Activated CD4-positive, alpha-beta T cell treated with anti-CD3 and anti-CD28 coated beads, Interleukin-2, amount 10 ng/mL, durations not matched to agents 24 days and 14 days (primary cell): ENCODE measurements at regions of chr1 and their contacts with region 1.

Region 1: DNA sequence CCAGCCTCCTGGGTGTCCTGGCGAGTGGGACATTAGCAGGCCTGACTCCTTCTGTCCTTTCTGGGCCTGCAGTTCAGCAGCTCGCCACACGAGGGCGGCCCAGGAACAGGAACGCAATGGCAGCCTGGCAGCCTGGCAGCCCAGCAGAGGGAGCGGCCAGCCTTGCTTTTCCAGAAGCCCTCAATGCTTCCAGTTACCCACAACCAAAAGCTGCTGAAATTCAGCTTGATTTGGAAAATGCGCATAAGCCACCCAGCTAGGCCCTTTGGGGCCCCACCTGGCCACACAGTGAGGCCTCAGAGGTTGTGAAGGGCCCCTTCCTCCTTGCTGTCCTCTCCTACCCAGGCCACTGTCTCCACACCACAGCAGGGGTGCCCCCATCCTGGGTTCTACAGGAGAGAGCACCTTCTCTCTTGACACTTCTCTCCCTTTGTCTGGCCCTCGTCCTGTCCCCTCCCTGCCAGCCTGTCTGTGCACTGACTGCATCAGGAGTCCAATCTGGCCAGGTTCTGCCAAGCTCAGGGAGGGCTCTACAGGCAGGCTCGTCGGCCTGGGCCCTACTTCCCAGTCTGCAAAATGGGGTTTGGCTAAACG is 103.4 kb upstream of the VAMP3 start:
- DNase-seq: peak; percentile 95
- H3K4me3 Mint-ChIP-seq: no peak overlapping the region
- H3K27ac Mint-ChIP-seq: no peak overlapping the region
- H3K4me1 Mint-ChIP-seq: no peaks in the 10 kb centered on the region
- H3K27me3 Mint-ChIP-seq: no peaks in the 10 kb centered on the region

Region 2: DNA sequence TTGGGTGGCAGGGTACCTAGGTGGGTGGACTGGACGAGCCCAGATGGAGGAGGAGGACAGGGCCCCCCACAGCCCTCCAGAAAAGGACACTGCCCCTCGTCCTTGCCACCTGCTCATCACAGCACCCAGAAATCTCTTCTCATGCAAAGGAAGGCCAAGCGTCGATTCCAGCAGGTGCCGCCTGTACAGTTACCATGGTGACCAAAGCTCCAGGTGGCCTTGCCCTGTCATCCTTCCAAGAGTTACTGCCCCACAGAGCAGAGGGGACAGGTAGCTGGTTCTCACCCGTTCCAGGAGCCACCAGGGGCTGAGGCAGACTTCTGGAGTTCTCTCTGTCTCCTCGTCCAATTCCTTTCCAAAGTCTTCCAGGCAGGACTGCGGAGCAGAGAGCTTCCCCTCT is 16.5 kb before region 1 on chr1:
- intact Hi-C with region 1: no loop called
- DNase-seq: no peak
- H3K4me3 Mint-ChIP-seq: no peak overlapping the region
- H3K27ac Mint-ChIP-seq: no peak overlapping the region
- H3K4me1 Mint-ChIP-seq: no peaks in the 10 kb centered on the region
- H3K27me3 Mint-ChIP-seq: no peaks in the 10 kb centered on the region

Region 3: DNA sequence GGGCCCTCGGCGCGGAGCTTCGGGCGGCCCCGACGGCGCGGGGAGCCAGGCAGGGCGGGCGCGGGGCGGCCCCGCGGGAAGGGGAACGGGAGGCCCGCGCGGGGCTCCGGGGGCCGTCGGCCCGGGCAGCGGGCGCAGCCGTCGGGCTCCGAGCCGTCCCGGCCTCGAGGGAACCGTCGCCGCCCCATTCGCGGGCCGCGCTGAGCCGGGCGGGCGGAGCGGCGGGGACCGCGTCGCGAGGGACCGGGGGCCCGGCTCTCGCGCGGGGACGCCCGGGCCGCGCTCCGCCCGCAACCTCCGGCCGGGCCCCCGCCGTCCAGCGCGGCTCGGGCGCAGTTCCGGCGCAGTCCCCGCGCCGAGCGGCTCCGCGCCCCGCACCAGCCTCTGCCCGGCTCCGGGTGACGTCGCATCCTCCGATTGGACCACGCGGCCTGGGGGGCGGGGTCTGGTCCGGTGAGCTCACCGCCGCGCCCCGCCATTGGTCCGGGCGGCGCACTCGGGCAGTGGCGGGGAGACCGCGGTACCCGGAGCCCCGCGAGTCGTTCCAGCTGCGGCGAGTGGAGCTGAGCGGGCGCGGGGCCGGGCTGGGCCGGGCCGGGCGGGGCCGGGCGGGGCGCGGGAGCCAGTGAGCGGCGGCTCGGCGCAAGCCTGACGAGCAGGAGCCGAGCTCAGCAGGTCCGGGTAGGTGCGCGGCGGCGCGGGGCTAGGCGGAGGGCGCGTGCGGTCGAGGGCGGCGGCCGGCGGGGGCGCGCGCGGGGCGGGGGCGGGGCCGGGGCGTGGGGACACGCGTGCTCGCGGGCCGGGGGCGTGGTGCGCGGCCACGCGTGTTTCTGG is 36.7 kb after region 1 on chr1:
- intact Hi-C with region 1: loop called (anchors 5 kb)
- DNase-seq: peak; percentile 98
- H3K4me3 Mint-ChIP-seq: peak overlapping the region; percentile 61
- H3K27ac Mint-ChIP-seq: no peak overlapping the region
- H3K4me1 Mint-ChIP-seq: peaks cover 4% of the 10 kb centered on the region
- H3K27me3 Mint-ChIP-seq: peaks cover 70% of the 10 kb centered on the region

Region 4: GRCh38 chr1:7752512-7753417 is 85.0 kb after region 1 on chr1:
- intact Hi-C with region 1: loop called (anchors 1 kb)
- DNase-seq: peak; percentile 78
- H3K4me3 Mint-ChIP-seq: peak overlapping the region; percentile 22
- H3K27ac Mint-ChIP-seq: no peak overlapping the region
- H3K4me1 Mint-ChIP-seq: peaks cover 6% of the 10 kb centered on the region
- H3K27me3 Mint-ChIP-seq: peaks cover 14% of the 10 kb centered on the region

Region 5: GRCh38 chr1:7827126-7827955 is 159.6 kb after region 1 on chr1:
- intact Hi-C with region 1: no loop called
- DNase-seq: peak; percentile 84
- H3K4me3 Mint-ChIP-seq: peak overlapping the region; percentile 95
- H3K27ac Mint-ChIP-seq: peak overlapping the region; percentile 96
- H3K4me1 Mint-ChIP-seq: peaks cover 5% of the 10 kb centered on the region
- H3K27me3 Mint-ChIP-seq: no peaks in the 10 kb centered on the region

Region 6: DNA sequence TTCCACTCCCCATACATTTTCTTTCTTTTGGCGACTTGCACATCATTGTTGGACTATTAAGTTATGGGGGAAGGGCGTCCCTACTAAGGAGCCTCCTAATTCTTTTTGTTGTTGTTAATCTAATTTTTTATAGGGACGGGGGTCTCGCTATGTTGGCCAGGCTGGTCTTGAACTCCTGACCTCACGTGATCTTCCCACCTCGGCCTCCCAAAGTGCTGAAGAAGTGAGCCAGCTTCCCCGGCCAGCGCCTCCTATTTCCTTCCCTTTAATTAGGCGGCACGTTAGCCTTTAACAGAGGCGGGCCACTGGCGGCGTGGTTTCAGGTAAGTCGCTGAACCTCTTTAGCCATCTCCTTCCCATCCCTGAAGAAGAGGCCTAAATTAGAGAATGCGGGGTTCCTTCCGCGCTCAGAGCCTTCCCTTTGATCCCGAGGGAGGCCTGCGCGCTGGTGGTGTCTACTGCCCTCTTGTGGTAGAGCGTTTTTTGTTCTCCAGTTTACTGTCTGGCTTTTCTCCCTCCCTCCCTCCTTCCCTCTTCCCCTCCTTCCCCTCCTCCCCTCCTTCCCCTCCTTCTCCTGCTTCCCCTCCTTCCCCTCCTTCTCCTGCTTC is 234.9 kb after region 1 on chr1:
- intact Hi-C with region 1: loop called (anchors 2 kb)
- DNase-seq: peak; percentile 88
- H3K4me3 Mint-ChIP-seq: peak overlapping the region; percentile 55
- H3K27ac Mint-ChIP-seq: no peak overlapping the region
- H3K4me1 Mint-ChIP-seq: peaks cover 16% of the 10 kb centered on the region
- H3K27me3 Mint-ChIP-seq: peaks cover 2% of the 10 kb centered on the region